Left cardiac atrium (tissue), 4 donors: ENCODE measurements at regions of chr17 and their contacts with region 1.

Region 1: DNA sequence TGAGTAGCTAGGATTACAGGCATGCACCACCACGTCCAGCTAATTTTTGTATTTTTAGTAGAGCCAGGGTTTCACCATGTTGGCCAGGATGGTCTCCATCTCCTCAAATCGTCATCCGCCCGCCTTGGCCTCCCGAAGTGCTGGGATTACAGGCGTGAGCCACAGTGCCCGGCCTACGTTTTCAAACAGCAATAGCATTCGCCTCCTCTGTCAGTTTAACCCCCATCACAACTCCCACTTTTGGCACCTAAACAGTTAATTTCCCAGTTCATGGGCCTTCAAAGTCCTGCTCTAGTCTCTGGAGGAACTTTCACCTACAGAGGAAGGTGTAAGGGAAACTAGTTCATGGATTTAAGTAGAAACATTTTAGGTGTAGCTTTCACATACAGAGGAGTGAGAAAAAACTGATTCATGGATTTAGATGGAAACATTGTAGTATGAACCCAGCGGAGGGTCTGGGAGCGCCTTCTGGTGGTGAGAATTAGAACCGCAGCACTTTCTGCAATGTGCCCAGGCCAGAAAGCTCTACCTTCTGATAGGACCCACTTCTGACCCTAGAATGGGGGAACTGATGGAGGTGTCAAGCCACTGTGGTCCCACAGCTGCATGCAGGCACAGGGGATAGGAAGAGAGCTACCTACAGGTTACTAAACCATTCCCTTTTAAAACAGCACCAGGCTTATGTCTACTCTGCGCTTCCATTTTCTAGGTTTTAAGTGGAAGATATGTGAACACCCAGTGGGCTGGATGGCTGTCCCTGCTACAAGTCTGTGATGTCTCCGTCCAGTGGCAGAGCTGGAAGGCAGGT is 12.0 kb upstream of the MEOX1 start:
- DNase-seq: peak; percentile 75
- ATAC-seq: peak; percentile 67 to 74

Region 2: DNA sequence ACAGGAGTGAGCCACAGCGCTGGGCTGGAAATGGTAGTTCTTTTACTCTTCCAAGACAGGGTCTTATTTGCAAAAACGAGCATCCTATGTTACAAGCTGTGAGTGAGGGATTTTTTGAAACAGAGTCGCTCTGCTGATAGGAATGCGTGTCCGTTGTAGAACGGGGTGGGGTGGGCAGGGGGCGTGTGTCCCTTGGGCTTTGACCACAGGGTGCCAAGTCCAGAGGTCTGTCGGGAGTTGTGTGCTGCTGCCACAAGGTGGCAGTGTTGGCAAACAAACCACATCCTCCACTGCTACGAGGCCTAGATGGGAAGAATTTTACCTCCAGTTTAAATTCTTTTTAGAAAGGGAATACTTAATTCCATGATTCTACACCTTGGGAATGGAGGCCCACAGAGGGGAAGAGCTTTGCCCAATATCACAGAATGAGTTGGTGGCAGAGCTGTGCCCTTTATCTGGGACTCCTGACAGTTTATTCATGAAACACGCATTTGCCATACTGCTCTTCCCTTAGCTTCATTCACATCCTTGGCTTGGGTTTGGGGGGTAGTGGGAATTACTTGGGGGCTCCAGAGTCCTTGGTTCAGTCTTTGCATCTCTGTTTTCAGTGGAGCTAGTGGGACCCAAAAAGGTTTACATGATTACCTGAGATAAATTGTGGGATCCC is 97.0 kb before region 1 on chr17:
- intact Hi-C with region 1: loop called in 1 of 2 experiments (anchors 1 kb)
- DNase-seq: peak; percentile 68
- ATAC-seq: peak; percentile 81 to 83

Region 3: DNA sequence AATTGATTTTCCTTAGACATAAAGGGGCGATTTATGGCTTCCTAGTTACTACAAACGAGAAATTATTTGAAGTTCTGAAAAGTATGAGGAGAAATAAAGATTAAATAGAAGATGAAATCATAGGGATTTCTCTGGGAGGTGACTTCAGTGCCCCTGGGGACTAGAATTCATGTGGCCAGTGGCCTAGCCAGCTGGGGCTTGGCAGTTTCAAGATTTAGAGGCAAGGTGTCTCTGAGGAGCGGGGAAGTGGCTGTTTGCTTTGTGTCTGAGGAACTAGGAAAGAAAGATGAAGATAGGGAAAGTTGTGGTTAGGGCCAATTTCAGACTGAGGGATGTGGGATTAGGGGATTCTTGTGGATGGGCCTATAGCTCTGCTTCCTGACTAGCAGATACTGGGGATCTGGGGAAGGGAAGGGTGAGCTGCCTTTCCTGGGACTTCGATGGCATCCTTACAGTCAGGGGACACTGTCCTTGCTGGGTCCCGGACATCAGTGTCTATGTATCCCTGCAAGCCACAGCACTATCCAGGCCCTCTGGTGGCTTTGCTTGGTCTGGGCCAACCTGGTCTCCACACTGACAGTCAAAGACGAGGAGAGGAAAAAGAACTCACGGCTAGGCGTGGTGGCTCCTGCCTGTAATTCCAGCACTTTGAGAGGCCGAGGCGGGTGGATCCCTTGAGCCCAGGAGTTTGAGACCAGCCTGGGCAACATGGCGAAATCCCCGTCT is 10.4 kb after region 1 on chr17:
- intact Hi-C with region 1: no loop called
- DNase-seq: no peak
- ATAC-seq: no peak

Region 4: GRCh38 chr17:43778337-43779144 is 104.8 kb after region 1 on chr17 and contains the start of gene DUSP3:
- intact Hi-C with region 1: no loop called
- DNase-seq: peak; percentile 97
- ATAC-seq: peak; percentile 96
- total RNA-seq, gene DUSP3: 149 to 204 TPM